ENCODE measurements at regions of chr18 and their contacts with region 1.

Region 1: GRCh38 chr18:13513021-13513420 is 213.3 kb downstream of the FAM210A start:
- DNase-seq: peak in 1 of 5 donors; percentile 49
- ATAC-seq: peak; percentile 90 to 95 (median 93)
- H3K4me3 ChIP-seq: no peak overlapping the region
- H3K27ac ChIP-seq: peak overlapping the region in 4 of 12 donors; percentile 17 to 67 (median 51)
- H3K4me1 ChIP-seq: peaks cover 0 to 34% (median 11%) of the 10 kb centered on the region in 12 donors
- H3K27me3 ChIP-seq: no peaks in the 10 kb centered on the region
- CTCF ChIP-seq: no peak
- POLR2A ChIP-seq: no peak

Region 2: GRCh38 chr18:13558124-13558523 is 45.1 kb after region 1 on chr18:
- intact Hi-C with region 1: loop called in 1 of 10 experiments (anchors 2 kb)
- DNase-seq: peak in 4 of 5 donors; percentile 45 to 72 (median 60)
- ATAC-seq: peak; percentile 73 to 84 (median 76)
- H3K4me3 ChIP-seq: no peak overlapping the region
- H3K27ac ChIP-seq: peak overlapping the region in 5 of 12 donors; percentile 23 to 59 (median 32)
- H3K4me1 ChIP-seq: peaks cover 3 to 68% (median 29%) of the 10 kb centered on the region in 12 donors
- H3K27me3 ChIP-seq: no peaks in the 10 kb centered on the region
- CTCF ChIP-seq: peak; percentile 48 to 75 (median 64)
- POLR2A ChIP-seq: no peak

Measured in heart left ventricle (tissue), 16 donors.